ENCODE measurements at regions of chrX and their contacts with region 1.

Region 1: DNA sequence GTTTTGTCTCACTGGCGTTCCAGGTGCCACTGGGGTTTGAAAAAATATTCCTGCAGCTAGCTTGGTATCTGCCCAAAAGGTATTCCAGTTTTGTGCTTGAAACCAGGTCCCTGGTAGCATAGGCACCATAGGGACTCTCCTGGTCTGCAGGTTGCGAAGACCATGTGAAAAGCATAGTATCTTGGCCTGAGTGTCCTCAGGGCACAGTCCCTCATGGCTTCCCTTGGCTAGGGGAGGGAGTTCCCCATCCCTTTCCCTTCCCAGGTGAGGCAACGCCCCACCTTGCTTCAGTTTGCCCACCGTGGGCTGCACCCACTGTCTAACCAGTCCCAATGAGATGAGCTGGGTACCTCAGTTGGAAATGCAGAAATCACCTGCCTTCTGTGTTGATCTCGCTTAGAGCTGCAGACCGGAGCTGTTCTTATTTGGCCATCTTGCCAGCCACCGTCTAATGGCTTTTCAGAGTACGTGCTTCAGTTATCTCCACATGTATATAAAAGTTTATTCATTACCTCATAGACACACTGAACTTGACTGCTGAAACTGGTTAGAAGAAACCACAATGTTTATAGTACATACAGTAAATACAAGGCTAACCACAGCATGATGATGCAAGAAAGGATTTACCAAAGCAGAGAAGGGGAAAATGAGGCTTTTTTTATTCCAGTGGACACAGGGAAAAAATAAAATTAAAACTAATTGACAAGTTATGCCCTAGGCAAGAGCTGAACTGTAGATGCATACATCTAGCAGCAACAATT is 10.6 kb downstream of the PBDC1 start:
- DNase-seq: no peak
- H3K4me3 ChIP-seq: no peak overlapping the region
- H3K27ac ChIP-seq: no peak overlapping the region
- H3K4me1 ChIP-seq: no peaks in the 10 kb centered on the region
- CTCF ChIP-seq: no peak

Region 2: DNA sequence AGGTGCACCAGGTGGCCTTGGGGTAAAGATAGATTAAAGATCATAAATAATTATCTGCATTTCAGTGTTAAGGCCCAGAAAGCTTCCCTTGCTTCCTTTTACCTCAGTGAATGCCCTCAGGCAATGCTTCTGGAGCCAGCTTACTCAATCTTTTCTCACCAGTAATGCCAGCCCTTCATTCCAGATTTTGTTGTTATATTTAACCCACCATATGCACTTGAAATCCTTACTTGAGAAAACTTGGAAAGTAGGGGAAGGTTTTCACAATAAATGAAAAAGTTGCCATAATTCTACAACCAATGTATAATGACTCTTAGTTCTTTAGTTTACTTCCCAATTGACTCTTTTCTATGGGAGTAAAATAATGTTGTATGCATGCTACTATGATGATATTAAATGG is 27.7 kb before region 1 on chrX:
- CTCF ChIA-PET with region 1: no interaction called
- POLR2A ChIA-PET with region 1: interaction called, 11 read pairs
- intact Hi-C with region 1: no loop called
- DNase-seq: no peak
- H3K4me3 ChIP-seq: no peak overlapping the region
- H3K27ac ChIP-seq: no peak overlapping the region
- H3K4me1 ChIP-seq: no peaks in the 10 kb centered on the region
- CTCF ChIP-seq: no peak